T-cell (primary cell): ENCODE measurements at regions of chr1 and their contacts with region 1.

Region 1: GRCh38 chr1:24536391-24536840 is 19.5 kb upstream of the NCMAP start:
- DNase-seq: peak; percentile 14 to 93 (median 82)
- ATAC-seq: peak; percentile 50 to 84 (median 54)
- H3K4me3 ChIP-seq: no peak overlapping the region
- H3K4me3 Mint-ChIP-seq: peak overlapping the region; percentile 79 to 83 (median 81)
- H3K27ac ChIP-seq: peak overlapping the region; percentile 98
- H3K27ac Mint-ChIP-seq: peak overlapping the region; percentile 99
- H3K4me1 ChIP-seq: peaks cover 23 to 38% of the 10 kb centered on the region in 2 experiments
- H3K4me1 Mint-ChIP-seq: peaks cover 73 to 86% (median 81%) of the 10 kb centered on the region in 3 donors
- H3K27me3 ChIP-seq: no peaks in the 10 kb centered on the region
- H3K27me3 Mint-ChIP-seq: no peaks in the 10 kb centered on the region

Region 2: DNA sequence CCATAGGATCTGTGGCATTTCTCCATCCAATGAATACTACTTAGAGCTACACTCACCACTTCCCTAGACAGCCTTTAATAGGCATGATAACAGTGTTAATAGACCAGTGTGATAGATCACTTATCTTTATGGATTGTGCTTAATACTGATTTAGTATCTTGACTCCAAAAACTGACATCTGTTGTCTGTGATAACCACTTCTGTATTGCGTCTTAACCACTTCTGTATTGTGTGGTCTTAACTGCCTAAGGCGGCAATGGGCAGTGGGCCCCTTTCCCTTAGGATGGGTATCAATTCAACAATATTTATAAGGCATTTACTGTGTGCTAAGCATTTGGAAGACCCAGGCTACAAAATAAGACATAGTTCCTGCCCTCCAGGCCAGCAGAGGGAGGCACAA is 65.8 kb before region 1 on chr1:
- CTCF ChIA-PET with region 1: interaction called in 1 of 2 experiments, 12 read pairs
- POLR2A ChIA-PET with region 1: no interaction called
- DNase-seq: no peak
- ATAC-seq: no peak
- H3K4me3 ChIP-seq: no peak overlapping the region
- H3K4me3 Mint-ChIP-seq: no peak overlapping the region
- H3K27ac ChIP-seq: no peak overlapping the region
- H3K27ac Mint-ChIP-seq: peak overlapping the region; percentile 74 to 76
- H3K4me1 ChIP-seq: peaks cover 0 to 5% of the 10 kb centered on the region in 2 experiments
- H3K4me1 Mint-ChIP-seq: peaks cover 13 to 30% (median 21%) of the 10 kb centered on the region in 3 donors
- H3K27me3 ChIP-seq: no peaks in the 10 kb centered on the region
- H3K27me3 Mint-ChIP-seq: no peaks in the 10 kb centered on the region

Region 3: GRCh38 chr1:24586970-24587820 is 50.8 kb after region 1 on chr1:
- CTCF ChIA-PET with region 1: interaction called, 3 to 19 read pairs
- POLR2A ChIA-PET with region 1: interaction called in 1 of 2 experiments, 9 read pairs
- DNase-seq: peak in 33 of 35 experiments; percentile 12 to 88 (median 50)
- ATAC-seq: peak; percentile 96 to 99 (median 98)
- H3K4me3 ChIP-seq: no peak overlapping the region
- H3K4me3 Mint-ChIP-seq: no peak overlapping the region
- H3K27ac ChIP-seq: peak overlapping the region; percentile 43
- H3K27ac Mint-ChIP-seq: peak overlapping the region; percentile 79 to 86
- H3K4me1 ChIP-seq: no peaks in the 10 kb centered on the region
- H3K4me1 Mint-ChIP-seq: peaks cover 6 to 9% (median 8%) of the 10 kb centered on the region in 3 donors
- H3K27me3 ChIP-seq: peaks cover 0 to 17% of the 10 kb centered on the region in 2 experiments
- H3K27me3 Mint-ChIP-seq: peaks cover 0 to 7% of the 10 kb centered on the region in 2 donors